ENCODE measurements at regions of chr4 and their contacts with region 1.

Region 1: GRCh38 chr4:186265683-186266652 is at the start of gene F11:
- DNase-seq: peak; percentile 50
- H3K4me3 ChIP-seq: peak within 1 kb of the TSS; percentile 37
- H3K27ac ChIP-seq: peak within 1 kb of the TSS; percentile 79
- H3K4me1 ChIP-seq: peaks cover 19% of the 10 kb centered on the region
- H3K27me3 ChIP-seq: no peaks in the 10 kb centered on the region
- CTCF ChIP-seq: no peak
- total RNA-seq, gene F11: 0.24 TPM in 1 of 2 replicates, not detected in the other

Region 2: GRCh38 chr4:185405296-185405999 is 860.5 kb before region 1 on chr4:
- CTCF ChIA-PET with region 1: no interaction called
- POLR2A ChIA-PET with region 1: no interaction called
- intact Hi-C with region 1: no loop called
- DNase-seq: no peak
- H3K4me3 ChIP-seq: no peak overlapping the region
- H3K27ac ChIP-seq: no peak overlapping the region
- H3K4me1 ChIP-seq: no peaks in the 10 kb centered on the region
- H3K27me3 ChIP-seq: no peaks in the 10 kb centered on the region
- CTCF ChIP-seq: no peak

Region 3: DNA sequence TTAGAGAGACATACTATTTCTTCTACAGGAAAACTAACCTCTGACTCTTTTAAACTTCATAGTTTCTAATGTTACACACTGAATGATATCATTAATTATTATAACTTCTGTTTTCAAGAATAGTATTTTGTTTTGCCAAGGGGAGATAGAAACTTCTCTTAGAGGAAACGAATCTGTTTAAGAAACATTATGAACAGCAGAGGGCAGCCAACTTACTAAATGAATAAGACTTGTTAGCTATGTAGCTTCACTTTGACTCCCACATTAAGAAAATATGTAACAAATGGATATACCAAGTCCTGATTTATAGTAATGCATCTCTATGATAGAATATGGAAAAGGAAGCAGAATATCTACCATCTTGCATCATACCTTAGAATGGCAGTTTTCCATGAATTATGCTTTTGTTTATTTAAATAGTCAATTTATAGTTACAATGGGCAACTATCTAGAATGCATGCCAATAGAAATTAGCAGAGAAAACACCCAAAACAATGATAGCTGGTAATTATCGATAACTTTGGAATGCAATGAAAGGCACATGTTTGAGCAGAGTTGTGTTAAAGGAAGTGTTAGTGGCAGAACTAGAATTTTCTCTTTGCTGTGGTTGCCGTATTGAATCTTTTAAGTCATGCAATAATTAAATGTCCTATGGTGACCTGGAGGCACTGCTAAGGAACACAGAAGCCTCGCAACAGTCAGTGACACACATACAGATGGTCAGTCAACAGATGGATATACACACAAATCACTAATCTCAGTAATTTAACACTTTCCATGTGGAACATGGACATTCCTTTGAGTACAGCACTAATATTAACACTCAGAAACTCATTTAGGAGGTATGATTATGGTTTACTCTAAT is 624.9 kb before region 1 on chr4:
- CTCF ChIA-PET with region 1: no interaction called
- POLR2A ChIA-PET with region 1: no interaction called
- intact Hi-C with region 1: no loop called
- DNase-seq: peak; percentile 69
- H3K4me3 ChIP-seq: no peak overlapping the region
- H3K27ac ChIP-seq: no peak overlapping the region
- H3K4me1 ChIP-seq: no peaks in the 10 kb centered on the region
- H3K27me3 ChIP-seq: peaks cover 11% of the 10 kb centered on the region
- CTCF ChIP-seq: peak; percentile 60

Region 4: GRCh38 chr4:186342582-186342981 is 76.6 kb after region 1 on chr4:
- CTCF ChIA-PET with region 1: no interaction called
- POLR2A ChIA-PET with region 1: interaction called, 21 read pairs
- intact Hi-C with region 1: no loop called
- DNase-seq: no peak
- H3K4me3 ChIP-seq: no peak overlapping the region
- H3K27ac ChIP-seq: no peak overlapping the region
- H3K4me1 ChIP-seq: no peaks in the 10 kb centered on the region
- H3K27me3 ChIP-seq: no peaks in the 10 kb centered on the region
- CTCF ChIP-seq: no peak

Measured in A673 (cell line).